ENCODE measurements at regions of chr7 and their contacts with region 1.

Region 1: GRCh38 chr7:87152107-87152844 is at the start of gene DMTF1:
- DNase-seq: peak; percentile 96
- H3K4me3 Mint-ChIP-seq: peak within 1 kb of the TSS; percentile 88
- H3K27ac Mint-ChIP-seq: peak within 1 kb of the TSS; percentile 95
- H3K4me1 Mint-ChIP-seq: peaks cover 27% of the 10 kb centered on the region
- H3K27me3 Mint-ChIP-seq: no peaks in the 10 kb centered on the region
- total RNA-seq, gene DMTF1: 95.7 and 102 TPM in 2 replicates

Region 2: GRCh38 chr7:86926732-86927131 is 225.5 kb before region 1 on chr7:
- intact Hi-C with region 1: loop called (anchors 1 kb)
- DNase-seq: peak; percentile 73
- H3K4me3 Mint-ChIP-seq: no peak overlapping the region
- H3K27ac Mint-ChIP-seq: no peak overlapping the region
- H3K4me1 Mint-ChIP-seq: no peaks in the 10 kb centered on the region
- H3K27me3 Mint-ChIP-seq: peaks cover 15% of the 10 kb centered on the region

Region 3: GRCh38 chr7:86939197-86939814 is 213.0 kb before region 1 on chr7:
- intact Hi-C with region 1: loop called (anchors 1 kb)
- DNase-seq: peak; percentile 86
- H3K4me3 Mint-ChIP-seq: no peak overlapping the region
- H3K27ac Mint-ChIP-seq: no peak overlapping the region
- H3K4me1 Mint-ChIP-seq: no peaks in the 10 kb centered on the region
- H3K27me3 Mint-ChIP-seq: peaks cover 5% of the 10 kb centered on the region

Region 4: GRCh38 chr7:86978808-86979506 is 173.3 kb before region 1 on chr7:
- intact Hi-C with region 1: no loop called
- DNase-seq: peak; percentile 61
- H3K4me3 Mint-ChIP-seq: no peak overlapping the region
- H3K27ac Mint-ChIP-seq: peak overlapping the region; percentile 17
- H3K4me1 Mint-ChIP-seq: peaks cover 12% of the 10 kb centered on the region
- H3K27me3 Mint-ChIP-seq: peaks cover 2% of the 10 kb centered on the region

Region 5: GRCh38 chr7:87059525-87060287 is 92.6 kb before region 1 on chr7 and contains the start of gene ELAPOR2:
- intact Hi-C with region 1: loop called (anchors 2 kb)
- DNase-seq: peak; percentile 94
- H3K4me3 Mint-ChIP-seq: peak within 1 kb of the TSS; percentile 80
- H3K27ac Mint-ChIP-seq: peak within 1 kb of the TSS; percentile 43
- H3K4me1 Mint-ChIP-seq: peaks cover 14% of the 10 kb centered on the region
- H3K27me3 Mint-ChIP-seq: peaks cover 29% of the 10 kb centered on the region
- total RNA-seq, gene ELAPOR2: 1.9 and 2.1 TPM in 2 replicates

Region 6: GRCh38 chr7:87188930-87189329 is 36.7 kb after region 1 on chr7:
- intact Hi-C with region 1: loop called (anchors 5 kb)
- DNase-seq: no peak
- H3K4me3 Mint-ChIP-seq: no peak overlapping the region
- H3K27ac Mint-ChIP-seq: peak overlapping the region; percentile 8
- H3K4me1 Mint-ChIP-seq: peaks cover 18% of the 10 kb centered on the region
- H3K27me3 Mint-ChIP-seq: no peaks in the 10 kb centered on the region

Region 7: GRCh38 chr7:87345166-87345927 is 193.1 kb after region 1 on chr7 and contains the start of gene CROT:
- intact Hi-C with region 1: loop called (anchors 1 kb)
- DNase-seq: peak; percentile 99
- H3K4me3 Mint-ChIP-seq: peak within 1 kb of the TSS; percentile 97
- H3K27ac Mint-ChIP-seq: peak within 1 kb of the TSS; percentile 95
- H3K4me1 Mint-ChIP-seq: peaks cover 46% of the 10 kb centered on the region
- H3K27me3 Mint-ChIP-seq: no peaks in the 10 kb centered on the region
- total RNA-seq, gene CROT: 6.2 and 7.1 TPM in 2 replicates

Region 8: DNA sequence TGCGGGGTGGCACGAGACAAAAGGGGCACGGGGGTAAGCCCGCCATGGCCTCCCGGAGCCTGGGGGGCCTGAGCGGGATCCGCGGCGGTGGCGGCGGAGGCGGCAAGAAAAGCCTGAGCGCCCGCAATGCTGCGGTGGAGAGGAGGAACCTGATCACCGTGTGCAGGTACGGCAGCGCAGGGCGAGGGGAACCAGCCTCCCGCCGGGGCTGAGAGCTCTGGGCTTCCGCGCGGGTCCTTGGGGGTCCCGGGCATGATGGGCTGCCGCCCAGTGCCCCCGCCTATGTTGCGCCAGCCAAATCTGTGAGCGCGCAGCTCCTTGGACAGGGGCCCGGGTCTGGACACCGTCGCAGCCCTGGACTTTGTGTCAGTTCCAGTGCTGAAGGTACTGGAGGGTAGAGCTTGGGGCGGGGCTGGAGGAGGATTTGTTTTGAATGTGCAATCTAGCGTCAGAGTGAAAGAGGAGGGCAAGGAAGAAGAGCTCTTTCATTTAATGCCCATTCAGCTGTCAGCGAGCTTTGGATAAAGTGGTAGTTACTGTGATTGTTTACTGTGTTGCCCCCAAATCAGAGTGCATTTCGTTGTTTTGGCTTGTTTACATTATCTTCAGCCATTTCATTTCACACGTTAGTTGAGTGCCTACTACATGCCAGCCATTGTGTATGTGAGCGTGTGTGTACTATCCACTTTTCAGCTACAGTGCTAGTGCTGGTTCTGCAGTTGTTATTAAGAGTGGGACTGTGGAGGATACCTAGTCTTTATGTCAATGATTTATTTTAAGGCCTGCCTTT is 476.7 kb after region 1 on chr7:
- intact Hi-C with region 1: loop called (anchors 5 kb)
- DNase-seq: peak; percentile 66
- H3K4me3 Mint-ChIP-seq: peak overlapping the region; percentile 88
- H3K27ac Mint-ChIP-seq: no peak overlapping the region
- H3K4me1 Mint-ChIP-seq: peaks cover 10% of the 10 kb centered on the region
- H3K27me3 Mint-ChIP-seq: peaks cover 26% of the 10 kb centered on the region